Activated CD4-positive, alpha-beta T cell treated with anti-CD3 and anti-CD28 coated beads for 36 hours (primary cell): ENCODE measurements at regions of chr11 and their contacts with region 1.

Region 1: GRCh38 chr11:64971421-64972233 is at the start of gene MAJIN:
- DNase-seq: peak; percentile 96
- ATAC-seq: peak; percentile 48
- H3K4me3 Mint-ChIP-seq: peak within 1 kb of the TSS; percentile 63
- H3K27ac Mint-ChIP-seq: peak within 1 kb of the TSS; percentile 94
- H3K4me1 Mint-ChIP-seq: peaks cover 42% of the 10 kb centered on the region
- H3K27me3 Mint-ChIP-seq: no peaks in the 10 kb centered on the region
- total RNA-seq, gene MAJIN: 1.2 to 1.6 TPM

Region 2: GRCh38 chr11:64854534-64855429 is 116.8 kb before region 1 on chr11:
- CTCF ChIA-PET with region 1: no interaction called
- POLR2A ChIA-PET with region 1: interaction called, 4 read pairs
- intact Hi-C with region 1: loop called in 1 of 2 experiments (anchors 2 kb)
- DNase-seq: peak; percentile 65
- ATAC-seq: no peak
- H3K4me3 Mint-ChIP-seq: peak overlapping the region; percentile 45
- H3K27ac Mint-ChIP-seq: peak overlapping the region; percentile 84
- H3K4me1 Mint-ChIP-seq: peaks cover 92% of the 10 kb centered on the region
- H3K27me3 Mint-ChIP-seq: no peaks in the 10 kb centered on the region

Region 3: DNA sequence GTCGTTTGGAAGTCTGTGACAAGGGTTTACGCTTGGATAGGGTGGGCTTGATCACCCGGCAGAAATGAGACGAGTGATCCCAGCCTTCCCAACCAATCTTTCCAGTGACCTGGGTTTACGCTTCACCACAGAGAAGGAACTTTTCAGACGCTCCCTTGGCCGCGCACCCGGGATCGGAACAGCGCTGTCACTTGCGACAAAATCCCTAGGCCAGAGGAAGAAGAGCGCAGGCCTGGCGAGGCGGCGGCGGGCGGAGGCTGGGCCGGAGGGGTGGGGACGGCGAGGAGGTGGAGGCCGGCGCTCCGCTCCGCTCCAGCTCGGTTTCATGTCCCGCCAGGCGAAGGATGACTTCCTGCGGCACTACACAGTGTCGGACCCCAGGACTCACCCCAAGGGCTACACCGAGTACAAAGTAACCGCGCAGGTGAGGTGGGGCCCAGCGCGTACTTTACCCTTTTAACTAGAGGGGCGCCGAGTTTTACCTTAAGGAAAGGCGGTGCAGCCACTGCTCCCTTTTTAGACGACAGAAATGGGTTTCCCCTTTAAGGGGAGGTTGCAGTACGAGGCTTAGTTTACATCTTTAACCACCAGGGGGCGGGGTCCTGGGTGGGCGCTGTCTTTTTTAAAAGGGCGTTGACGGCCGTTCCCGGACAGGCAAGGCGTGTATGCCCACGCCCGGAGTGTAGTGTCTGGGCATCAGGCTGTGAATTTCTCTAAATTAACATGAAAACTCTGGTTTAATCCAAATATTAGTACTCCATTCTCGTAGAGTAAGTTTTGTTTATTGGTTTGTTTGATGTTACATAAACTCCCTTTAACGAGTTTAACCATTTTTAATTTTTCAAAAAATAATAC is 55.8 kb after region 1 on chr11 and contains the start of gene SNX15:
- CTCF ChIA-PET with region 1: interaction called, 3 read pairs
- POLR2A ChIA-PET with region 1: no interaction called
- intact Hi-C with region 1: loop called in 1 of 2 experiments (anchors 1 kb)
- DNase-seq: peak; percentile 94
- ATAC-seq: peak; percentile 91
- H3K4me3 Mint-ChIP-seq: peak within 1 kb of the TSS; percentile 73
- H3K27ac Mint-ChIP-seq: peak within 1 kb of the TSS; percentile 86
- H3K4me1 Mint-ChIP-seq: peaks cover 21% of the 10 kb centered on the region
- H3K27me3 Mint-ChIP-seq: no peaks in the 10 kb centered on the region
- total RNA-seq, gene SNX15: 12.1 to 14.2 TPM

Region 4: DNA sequence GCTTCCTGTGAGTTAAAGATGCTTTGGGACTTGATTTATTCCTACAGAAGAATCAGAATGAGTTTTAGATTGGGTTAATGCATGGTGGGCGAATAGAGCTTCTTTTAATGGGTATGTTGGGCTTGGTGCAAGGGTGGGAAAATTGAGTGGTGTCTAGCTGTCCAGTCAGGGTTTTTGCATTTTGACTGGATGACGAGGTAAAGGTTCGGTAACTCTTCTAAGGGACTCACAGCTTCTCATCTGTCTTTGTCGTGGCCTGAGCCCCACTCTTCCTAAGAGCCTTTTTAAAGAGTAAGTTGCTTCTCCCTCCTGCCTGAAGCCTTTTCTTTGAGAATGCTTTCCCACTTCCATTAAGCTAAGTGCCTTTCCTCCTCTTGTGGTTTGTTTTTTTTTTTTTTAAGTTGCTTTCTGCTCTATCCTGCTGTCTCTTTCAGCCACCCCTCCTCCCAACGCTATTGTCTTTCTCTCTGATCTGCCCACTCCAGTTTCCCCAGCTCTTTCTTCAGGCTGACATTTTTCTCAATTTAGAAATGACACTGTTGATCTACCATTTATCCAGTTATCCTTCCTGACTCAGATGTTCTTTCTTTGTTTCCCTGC is 363.2 kb after region 1 on chr11:
- CTCF ChIA-PET with region 1: no interaction called
- POLR2A ChIA-PET with region 1: no interaction called
- intact Hi-C with region 1: no loop called
- DNase-seq: no peak
- ATAC-seq: no peak
- H3K4me3 Mint-ChIP-seq: peak overlapping the region; percentile 81
- H3K27ac Mint-ChIP-seq: peak overlapping the region; percentile 87
- H3K4me1 Mint-ChIP-seq: peaks cover 34% of the 10 kb centered on the region
- H3K27me3 Mint-ChIP-seq: no peaks in the 10 kb centered on the region